Kidney (tissue), 22 donors: ENCODE measurements at regions of chr1 and their contacts with region 1.

Region 1: DNA sequence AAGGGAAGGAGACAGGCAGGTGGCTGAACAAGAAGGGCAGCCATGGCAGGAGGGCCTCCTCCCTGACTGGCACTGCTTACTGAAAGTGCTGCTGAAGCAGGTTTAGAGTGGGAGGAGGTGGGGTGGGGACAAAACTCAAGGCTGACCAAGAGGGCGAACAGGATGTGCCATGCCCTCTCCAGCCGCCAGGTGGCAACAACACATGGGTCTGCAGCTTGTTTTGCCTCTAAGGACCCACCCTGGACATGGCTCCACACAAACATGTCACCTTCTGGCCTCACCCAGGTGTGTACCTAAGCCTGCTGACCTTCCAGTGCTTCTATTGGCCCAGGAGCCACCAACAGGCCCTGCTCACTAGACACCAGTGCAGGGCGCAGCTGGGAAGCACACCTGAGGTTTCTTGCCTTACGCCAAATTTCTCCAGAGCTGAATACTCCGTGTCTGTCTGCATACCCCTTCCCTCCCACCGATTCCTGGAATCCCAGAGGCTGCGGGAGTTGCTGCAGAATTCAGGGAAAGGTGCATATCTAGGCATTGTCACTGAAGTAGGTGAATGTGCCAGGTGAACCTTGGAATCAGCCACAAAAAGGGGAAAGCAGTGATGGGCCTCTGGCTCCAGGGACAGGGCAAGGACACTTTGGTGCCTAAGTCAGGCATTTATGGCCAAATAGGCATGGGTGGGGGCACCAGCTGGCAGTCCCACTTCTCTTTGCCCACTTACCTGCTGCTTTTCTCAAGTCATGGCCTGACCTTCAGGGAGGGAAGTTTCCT is 5.3 kb downstream of the PSRC1 start:
- DNase-seq: peak; percentile 79 to 91 (median 87)
- H3K4me3 ChIP-seq: no peak overlapping the region
- H3K27ac ChIP-seq: peak overlapping the region; percentile 49 to 55
- H3K4me1 ChIP-seq: peaks cover 4 to 28% (median 13%) of the 10 kb centered on the region in 3 donors
- H3K27me3 ChIP-seq: no peaks in the 10 kb centered on the region
- CTCF ChIP-seq: peak; percentile 87

Region 2: DNA sequence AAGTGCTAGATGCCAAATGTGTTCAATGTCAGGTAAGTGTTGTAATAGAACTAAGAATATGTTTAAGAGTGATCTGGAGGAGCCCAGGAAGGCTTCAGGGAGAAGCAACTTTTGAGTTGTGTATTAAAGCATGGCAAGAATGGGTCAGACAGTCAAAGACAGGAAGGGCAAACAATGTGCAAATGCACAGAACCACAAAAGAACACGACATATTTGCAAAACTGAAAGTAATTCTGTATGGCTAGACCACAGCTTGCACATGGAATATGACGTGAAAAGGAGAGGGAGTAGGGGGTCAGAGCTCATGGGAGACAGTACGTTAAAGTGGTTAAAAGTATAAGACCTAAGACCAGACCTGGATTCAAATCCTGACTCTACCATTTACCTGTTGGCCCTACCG is 127.2 kb after region 1 on chr1:
- intact Hi-C with region 1: loop called (anchors 10 kb)
- DNase-seq: no peak
- H3K4me3 ChIP-seq: no peak overlapping the region
- H3K27ac ChIP-seq: no peak overlapping the region
- H3K4me1 ChIP-seq: no peaks in the 10 kb centered on the region
- H3K27me3 ChIP-seq: no peaks in the 10 kb centered on the region
- CTCF ChIP-seq: no peak

Region 3: DNA sequence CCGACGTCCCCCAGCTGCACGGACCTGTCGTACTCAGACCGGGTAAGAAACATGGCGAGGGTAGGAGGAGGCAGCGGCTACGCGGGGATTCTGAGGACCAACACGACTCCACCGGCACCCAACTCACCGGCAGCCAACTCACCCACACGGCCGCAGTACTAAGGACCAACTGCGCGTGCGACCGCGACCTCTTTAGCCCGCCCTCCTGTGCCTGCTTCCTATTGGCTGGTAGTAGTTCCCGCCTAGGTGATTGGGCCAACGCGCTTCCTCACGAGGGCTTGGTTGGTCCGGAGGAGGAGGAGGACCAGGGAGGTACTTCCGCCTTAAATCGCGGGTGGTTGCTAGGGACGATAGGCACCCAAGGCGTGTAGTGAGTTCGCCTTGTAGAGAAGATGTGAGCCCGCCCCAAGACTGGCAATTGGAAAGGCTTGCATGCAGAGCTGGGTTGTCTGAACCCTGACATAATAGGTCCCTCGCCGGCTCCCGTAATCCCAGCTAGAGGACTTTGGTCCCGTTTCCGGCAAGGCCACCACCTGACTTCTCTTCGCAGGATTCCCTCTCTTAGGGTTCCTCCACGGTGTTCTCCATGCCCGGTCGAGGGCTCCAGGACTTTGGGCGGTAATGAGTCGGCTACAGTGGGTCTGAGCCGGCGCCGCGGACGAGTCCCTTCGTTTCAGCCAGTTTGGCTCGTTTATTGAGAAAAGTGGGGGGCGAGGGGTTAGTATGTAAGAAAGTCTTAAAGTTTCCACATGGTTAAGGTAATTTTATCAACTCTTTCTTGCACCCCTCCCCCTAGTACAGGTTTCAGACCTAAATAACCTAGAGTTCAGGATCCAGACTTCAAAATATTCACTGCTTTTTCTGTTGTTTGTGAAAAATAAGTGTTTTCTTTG is 148.9 kb after region 1 on chr1 and contains the start of gene PSMA5:
- intact Hi-C with region 1: no loop called
- DNase-seq: peak; percentile 97 to 99 (median 99)
- H3K4me3 ChIP-seq: peak within 1 kb of the TSS; percentile 63 to 94 (median 92)
- H3K27ac ChIP-seq: peak within 1 kb of the TSS; percentile 85 to 92
- H3K4me1 ChIP-seq: peaks cover 4 to 8% (median 6%) of the 10 kb centered on the region in 3 donors
- H3K27me3 ChIP-seq: no peaks in the 10 kb centered on the region
- CTCF ChIP-seq: peak; percentile 16
- total RNA-seq, gene PSMA5: 71.4 TPM